ENCODE measurements at regions of chr16 and their contacts with region 1.

Region 1: DNA sequence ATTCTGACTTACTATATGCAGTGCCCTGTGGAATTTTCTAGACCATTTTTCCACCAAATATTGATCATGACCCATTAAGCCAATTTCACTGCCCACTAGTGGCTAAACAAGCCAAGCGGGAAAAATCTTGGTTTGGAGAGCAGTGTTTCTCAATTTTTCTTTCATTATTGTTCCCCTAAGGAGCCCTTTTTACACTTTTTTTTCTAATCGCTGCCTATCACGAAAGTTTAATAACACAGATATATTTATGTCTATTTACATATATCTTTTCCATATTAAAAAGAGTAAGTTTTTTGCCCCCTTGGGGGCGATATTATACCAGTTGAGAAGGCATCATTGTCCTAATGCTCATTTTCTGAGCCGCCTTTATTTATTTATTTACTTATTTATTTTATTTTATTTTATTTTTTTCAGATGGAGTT is 10.8 kb upstream of the TLCD3B start:
- H3K4me3 ChIP-seq: no peak overlapping the region
- H3K27ac ChIP-seq: no peak overlapping the region
- H3K4me1 ChIP-seq: no peaks in the 10 kb centered on the region
- CTCF ChIP-seq: peak; percentile 78

Region 2: GRCh38 chr16:30052671-30053372 is 11.0 kb after region 1 on chr16:
- CTCF ChIA-PET with region 1: interaction called, 17 read pairs
- POLR2A ChIA-PET with region 1: interaction called, 5 read pairs
- H3K4me3 ChIP-seq: peak overlapping the region; percentile 63
- H3K27ac ChIP-seq: peak overlapping the region; percentile 65
- H3K4me1 ChIP-seq: peaks cover 3% of the 10 kb centered on the region; the same call in 1 of the 2 replicates
- CTCF ChIP-seq: peak; percentile 38; the same call in 1 of the 2 replicates